Right lobe of liver (tissue), 6 donors: ENCODE measurements at regions of chr4 and their contacts with region 1.

Region 1: GRCh38 chr4:6986781-6987587 is 56.2 kb upstream of the TADA2B start:
- DNase-seq: peak; percentile 97 to 98 (median 97)
- ATAC-seq: peak; percentile 94 to 97 (median 96)
- H3K4me3 ChIP-seq: peak overlapping the region; percentile 71 to 88 (median 72)
- H3K27ac ChIP-seq: peak overlapping the region; percentile 73 to 92 (median 85)
- H3K4me1 ChIP-seq: peaks cover 0 to 44% (median 12%) of the 10 kb centered on the region in 4 donors
- H3K27me3 ChIP-seq: no peaks in the 10 kb centered on the region
- CTCF ChIP-seq: peak in 1 of 4 donors; percentile 3
- POLR2A ChIP-seq: peak; percentile 55

Region 2: GRCh38 chr4:6926681-6927478 is 60.1 kb before region 1 on chr4:
- intact Hi-C with region 1: loop called in 1 of 2 experiments (anchors 10 kb)
- DNase-seq: peak; percentile 85 to 93 (median 92)
- ATAC-seq: peak; percentile 76 to 85 (median 80)
- H3K4me3 ChIP-seq: no peak overlapping the region
- H3K27ac ChIP-seq: peak overlapping the region; percentile 61 to 76 (median 74)
- H3K4me1 ChIP-seq: peaks cover 2 to 97% (median 50%) of the 10 kb centered on the region in 4 donors
- H3K27me3 ChIP-seq: no peaks in the 10 kb centered on the region
- CTCF ChIP-seq: no peak
- POLR2A ChIP-seq: peak; percentile 65

Region 3: GRCh38 chr4:7295911-7296660 is 309.1 kb after region 1 on chr4:
- intact Hi-C with region 1: no loop called
- DNase-seq: peak; percentile 47 to 67 (median 52)
- ATAC-seq: peak; percentile 61 to 82 (median 76)
- H3K4me3 ChIP-seq: no peak overlapping the region
- H3K27ac ChIP-seq: no peak overlapping the region
- H3K4me1 ChIP-seq: no peaks in the 10 kb centered on the region
- H3K27me3 ChIP-seq: no peaks in the 10 kb centered on the region
- CTCF ChIP-seq: peak; percentile 54 to 68 (median 68)
- POLR2A ChIP-seq: no peak